Activated CD8-positive, alpha-beta memory T cell treated with anti-CD3 and anti-CD28 coated beads, Interleukin-2, amount 10 ng/mL, durations not matched to agents 7 days and 5 days (primary cell): ENCODE measurements at regions of chr6 and their contacts with region 1.

Region 1: GRCh38 chr6:137641474-137642077 is 147.4 kb upstream of the OLIG3 start:
- DNase-seq: peak; percentile 76
- ATAC-seq: peak; percentile 83
- H3K4me3 Mint-ChIP-seq: no peak overlapping the region
- H3K27ac Mint-ChIP-seq: no peak overlapping the region
- H3K4me1 Mint-ChIP-seq: peaks cover 13% of the 10 kb centered on the region
- H3K27me3 Mint-ChIP-seq: peaks cover 10% of the 10 kb centered on the region

Region 2: DNA sequence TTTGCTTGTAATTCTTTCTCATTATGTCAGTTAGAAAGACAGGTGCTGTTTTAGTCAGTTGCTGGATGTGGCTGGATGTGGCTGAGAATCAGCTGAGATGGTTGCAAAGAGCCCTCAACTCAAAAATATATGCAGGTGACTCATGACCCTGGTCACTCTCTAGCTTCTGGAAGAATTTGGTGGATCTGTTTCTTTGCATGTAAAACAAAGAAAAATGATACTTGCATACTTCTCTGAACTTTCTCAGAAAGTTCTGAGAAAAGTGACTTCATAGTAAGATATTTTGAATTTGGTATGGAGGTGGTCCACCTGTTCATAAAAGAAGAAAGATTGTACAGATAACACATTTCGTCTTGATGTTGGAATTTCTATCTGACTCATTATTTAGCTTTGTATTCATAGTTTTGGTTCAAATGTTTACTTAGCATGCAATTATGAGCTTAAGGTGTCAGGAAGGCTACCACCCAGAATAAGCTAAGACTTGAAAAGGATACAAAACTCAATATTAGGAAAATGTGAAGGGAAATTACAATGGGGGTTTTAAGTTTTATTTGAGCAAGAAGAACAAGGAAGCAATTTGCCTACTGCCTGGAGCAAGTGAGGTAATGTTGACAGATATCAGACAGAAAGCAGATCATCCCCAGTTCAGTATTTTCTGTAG is 15.9 kb after region 1 on chr6:
- CTCF ChIA-PET with region 1: interaction called, 10 read pairs
- DNase-seq: peak; percentile 81
- ATAC-seq: peak; percentile 80
- H3K4me3 Mint-ChIP-seq: no peak overlapping the region
- H3K27ac Mint-ChIP-seq: peak overlapping the region; percentile 72
- H3K4me1 Mint-ChIP-seq: peaks cover 39% of the 10 kb centered on the region
- H3K27me3 Mint-ChIP-seq: no peaks in the 10 kb centered on the region